Gastrocnemius medialis (tissue), 4 donors: ENCODE measurements at regions of chr2 and their contacts with region 1.

Region 1: GRCh38 chr2:127701193-127701650 is at the start of gene SFT2D3:
- DNase-seq: peak; percentile 90
- ATAC-seq: peak; percentile 82 to 84
- H3K4me3 ChIP-seq: peak within 1 kb of the TSS; percentile 60 to 72 (median 68)
- H3K27ac ChIP-seq: peak within 1 kb of the TSS; percentile 92 to 95 (median 95)
- H3K4me1 ChIP-seq: peaks cover 36% of the 10 kb centered on the region in 2 donors
- H3K27me3 ChIP-seq: no peaks in the 10 kb centered on the region
- CTCF ChIP-seq: no peak
- POLR2A ChIP-seq: peak; percentile 84 to 87
- total RNA-seq, gene SFT2D3: 3.0 to 5.5 (median 3.5) TPM

Region 2: DNA sequence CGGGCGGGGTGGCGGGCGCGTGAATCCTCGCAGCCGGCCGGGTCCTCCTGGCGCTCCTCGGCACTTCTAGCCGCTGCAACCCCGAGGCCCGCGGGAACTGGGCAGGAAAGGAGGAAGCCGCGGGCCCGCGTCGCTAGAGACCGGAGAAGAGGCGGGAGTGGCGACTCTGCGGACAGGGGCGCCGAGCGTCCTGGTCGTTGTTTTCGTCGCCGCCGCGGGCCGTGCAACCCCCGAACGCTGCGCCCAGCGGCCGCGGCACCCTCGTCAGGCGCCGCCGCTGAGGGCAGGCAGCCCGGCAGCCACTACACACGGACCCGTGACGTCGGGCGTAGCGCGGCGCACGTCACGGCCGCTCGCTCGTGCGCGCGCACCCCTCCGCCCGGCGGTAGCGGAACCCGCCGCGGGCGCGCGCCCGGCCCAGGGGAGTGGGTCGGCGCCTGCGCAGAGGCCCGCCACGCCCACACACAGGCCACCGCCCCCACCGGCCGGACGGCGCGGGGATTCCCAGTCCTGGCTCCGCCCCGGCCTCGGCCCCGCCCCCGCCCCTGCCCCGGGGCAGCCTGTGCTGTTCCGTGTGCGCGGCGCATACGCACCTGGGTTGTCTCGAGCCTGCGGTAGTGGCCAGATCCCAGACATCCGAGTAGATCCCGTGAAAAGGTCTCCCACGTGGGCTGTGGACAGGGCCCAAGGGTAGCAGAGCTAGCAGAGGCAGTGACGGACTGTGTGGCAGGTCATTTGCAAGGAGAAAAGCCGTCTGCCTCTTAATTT is 313.4 kb before region 1 on chr2 and contains the start of gene MAP3K2:
- in situ Hi-C with region 1: no loop called
- intact Hi-C with region 1: loop called (anchors 10 kb)
- DNase-seq: peak; percentile 94 to 98
- ATAC-seq: peak; percentile 82 to 84
- H3K4me3 ChIP-seq: peak within 1 kb of the TSS; percentile 77 to 97 (median 94)
- H3K27ac ChIP-seq: peak within 1 kb of the TSS; percentile 99 to 100 (median 100)
- H3K4me1 ChIP-seq: peaks cover 35 to 40% of the 10 kb centered on the region in 2 donors
- H3K27me3 ChIP-seq: no peaks in the 10 kb centered on the region
- CTCF ChIP-seq: peak in 1 of 5 experiments; percentile 11
- POLR2A ChIP-seq: peak; percentile 97 to 99
- total RNA-seq, gene MAP3K2: 33.8 to 46.4 (median 39.4) TPM

Region 3: GRCh38 chr2:127408004-127408806 is 293.0 kb before region 1 on chr2:
- in situ Hi-C with region 1: no loop called
- intact Hi-C with region 1: loop called (anchors 5 kb)
- DNase-seq: peak; percentile 80 to 90
- ATAC-seq: peak; percentile 63 to 70
- H3K4me3 ChIP-seq: peak overlapping the region; percentile 47 to 59 (median 54)
- H3K27ac ChIP-seq: peak overlapping the region; percentile 86 to 95 (median 89)
- H3K4me1 ChIP-seq: peaks cover 16 to 25% of the 10 kb centered on the region in 2 donors
- H3K27me3 ChIP-seq: no peaks in the 10 kb centered on the region
- CTCF ChIP-seq: peak in 1 of 5 experiments; percentile 6
- POLR2A ChIP-seq: peak; percentile 85 to 92

Region 4: DNA sequence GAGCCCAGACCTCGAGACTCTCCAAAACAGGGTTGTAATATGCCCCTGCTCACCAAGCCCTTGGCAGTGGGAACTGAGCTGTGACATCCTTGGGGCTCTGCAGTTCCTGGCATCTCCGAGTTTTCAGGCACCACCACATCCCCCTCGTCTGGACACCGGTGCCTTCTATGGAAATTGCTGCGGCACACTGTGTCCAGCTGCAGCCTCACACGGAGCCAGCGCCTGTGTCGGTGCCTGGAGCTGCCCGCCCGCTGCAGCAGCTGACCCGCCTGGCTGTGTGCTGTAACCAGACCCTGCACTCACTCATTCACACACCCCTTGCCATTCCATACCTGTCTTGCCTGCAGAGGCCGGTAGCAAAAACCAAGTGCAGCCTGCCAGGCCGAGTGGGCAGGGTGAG is 186.7 kb before region 1 on chr2:
- in situ Hi-C with region 1: no loop called
- intact Hi-C with region 1: loop called (anchors 5 kb)
- DNase-seq: peak; percentile 86 to 92
- ATAC-seq: peak; percentile 84 to 86
- H3K4me3 ChIP-seq: peak overlapping the region; percentile 28 to 42 (median 32)
- H3K27ac ChIP-seq: peak overlapping the region; percentile 88 to 92 (median 90)
- H3K4me1 ChIP-seq: peaks cover 75 to 79% of the 10 kb centered on the region in 2 donors
- H3K27me3 ChIP-seq: no peaks in the 10 kb centered on the region
- CTCF ChIP-seq: no peak
- POLR2A ChIP-seq: peak; percentile 33 to 64

Region 5: DNA sequence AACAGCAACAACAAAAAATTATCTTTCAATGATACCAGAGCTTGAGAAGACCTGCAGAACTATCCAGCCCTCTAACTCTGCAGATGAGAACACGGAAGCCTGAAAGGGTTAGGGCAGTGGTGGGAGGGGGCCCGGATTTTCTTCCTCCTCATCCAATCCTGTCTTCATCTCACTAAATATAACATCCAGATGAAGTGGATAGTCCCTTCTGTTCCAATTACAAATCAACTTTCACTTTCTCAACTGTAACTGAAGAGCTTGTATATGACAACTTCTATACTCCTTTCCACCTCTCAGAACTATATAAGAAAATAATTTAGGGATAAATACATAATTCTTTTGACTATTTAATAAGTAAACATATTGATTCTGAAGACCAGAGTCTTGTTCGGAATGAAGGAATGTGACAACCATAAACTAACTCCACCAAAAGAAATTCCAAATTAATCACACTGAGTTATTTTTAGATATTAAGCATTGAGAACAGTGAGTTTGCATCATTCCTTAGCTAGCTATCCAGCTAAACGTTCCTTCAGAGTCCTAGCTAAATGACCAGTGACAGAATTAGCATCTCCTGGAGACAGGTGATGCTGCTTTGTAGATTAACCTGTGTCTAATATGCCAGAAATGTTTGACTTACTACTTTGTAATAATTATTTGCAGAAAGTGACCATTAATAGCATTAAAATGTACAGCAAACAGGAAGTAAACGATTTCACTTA is 32.8 kb after region 1 on chr2:
- in situ Hi-C with region 1: no loop called
- intact Hi-C with region 1: loop called (anchors 1 kb)
- DNase-seq: no peak
- ATAC-seq: peak; percentile 72 to 90
- H3K4me3 ChIP-seq: peak overlapping the region; percentile 24 to 40 (median 32)
- H3K27ac ChIP-seq: peak overlapping the region; percentile 68 to 73 (median 70)
- H3K4me1 ChIP-seq: peaks cover 29 to 31% of the 10 kb centered on the region in 2 donors
- H3K27me3 ChIP-seq: no peaks in the 10 kb centered on the region
- CTCF ChIP-seq: no peak
- POLR2A ChIP-seq: no peak

Region 6: GRCh38 chr2:127810619-127811396 is 109.6 kb after region 1 on chr2 and contains the start of gene WDR33:
- in situ Hi-C with region 1: no loop called
- intact Hi-C with region 1: loop called (anchors 1 kb)
- DNase-seq: peak; percentile 80 to 90
- ATAC-seq: peak; percentile 95 to 96
- H3K4me3 ChIP-seq: peak within 1 kb of the TSS; percentile 70 to 89 (median 88)
- H3K27ac ChIP-seq: peak within 1 kb of the TSS; percentile 86 to 97 (median 93)
- H3K4me1 ChIP-seq: peaks cover 34 to 48% of the 10 kb centered on the region in 2 donors
- H3K27me3 ChIP-seq: no peaks in the 10 kb centered on the region
- CTCF ChIP-seq: peak in 2 of 5 experiments; percentile 15 to 19
- POLR2A ChIP-seq: peak; percentile 76 to 79
- total RNA-seq, gene WDR33: 13.6 to 31.4 (median 20.6) TPM